CD8-positive, alpha-beta memory T cell (primary cell): ENCODE measurements at regions of chr1 and their contacts with region 1.

Region 1: GRCh38 chr1:89274411-89274857 is 1.8 kb upstream of the GBP5 start:
- DNase-seq: peak in 1 of 5 donors; percentile 41
- H3K4me3 ChIP-seq: peak overlapping the region; percentile 35
- H3K4me3 Mint-ChIP-seq: peak overlapping the region; percentile 83 to 91 (median 89)
- H3K27ac ChIP-seq: peak overlapping the region; percentile 41
- H3K27ac Mint-ChIP-seq: peak overlapping the region; percentile 97 to 99 (median 98)
- H3K4me1 ChIP-seq: peaks cover 50% of the 10 kb centered on the region
- H3K4me1 Mint-ChIP-seq: peaks cover 59 to 84% (median 77%) of the 10 kb centered on the region in 3 donors
- H3K27me3 ChIP-seq: no peaks in the 10 kb centered on the region
- H3K27me3 Mint-ChIP-seq: no peaks in the 10 kb centered on the region

Region 2: DNA sequence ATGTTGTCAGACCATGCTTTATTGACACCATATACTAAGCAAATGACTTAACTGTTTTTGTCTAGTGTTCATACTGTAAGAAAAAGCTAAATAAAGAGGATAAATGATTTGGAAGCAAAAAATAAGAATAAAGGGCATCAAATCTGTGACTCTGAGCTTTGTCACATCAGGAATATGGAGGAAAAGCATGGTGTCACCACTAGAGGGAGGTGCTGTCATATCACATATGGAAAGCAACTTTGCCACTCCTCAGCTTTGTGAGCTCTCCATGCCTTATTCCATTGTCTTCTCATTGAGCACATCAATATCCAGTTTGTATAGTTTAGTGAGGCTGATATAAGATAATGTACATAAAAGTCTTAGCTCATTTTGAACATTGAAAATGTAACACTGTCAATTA is 188.7 kb before region 1 on chr1:
- CTCF ChIA-PET with region 1: interaction called, 13 read pairs
- POLR2A ChIA-PET with region 1: no interaction called
- DNase-seq: peak; percentile 8 to 56 (median 42)
- H3K4me3 ChIP-seq: no peak overlapping the region
- H3K4me3 Mint-ChIP-seq: no peak overlapping the region
- H3K27ac ChIP-seq: no peak overlapping the region
- H3K27ac Mint-ChIP-seq: no peak overlapping the region
- H3K4me1 ChIP-seq: no peaks in the 10 kb centered on the region
- H3K4me1 Mint-ChIP-seq: peaks cover 6 to 8% (median 6%) of the 10 kb centered on the region in 3 donors
- H3K27me3 ChIP-seq: no peaks in the 10 kb centered on the region
- H3K27me3 Mint-ChIP-seq: no peaks in the 10 kb centered on the region

Region 3: DNA sequence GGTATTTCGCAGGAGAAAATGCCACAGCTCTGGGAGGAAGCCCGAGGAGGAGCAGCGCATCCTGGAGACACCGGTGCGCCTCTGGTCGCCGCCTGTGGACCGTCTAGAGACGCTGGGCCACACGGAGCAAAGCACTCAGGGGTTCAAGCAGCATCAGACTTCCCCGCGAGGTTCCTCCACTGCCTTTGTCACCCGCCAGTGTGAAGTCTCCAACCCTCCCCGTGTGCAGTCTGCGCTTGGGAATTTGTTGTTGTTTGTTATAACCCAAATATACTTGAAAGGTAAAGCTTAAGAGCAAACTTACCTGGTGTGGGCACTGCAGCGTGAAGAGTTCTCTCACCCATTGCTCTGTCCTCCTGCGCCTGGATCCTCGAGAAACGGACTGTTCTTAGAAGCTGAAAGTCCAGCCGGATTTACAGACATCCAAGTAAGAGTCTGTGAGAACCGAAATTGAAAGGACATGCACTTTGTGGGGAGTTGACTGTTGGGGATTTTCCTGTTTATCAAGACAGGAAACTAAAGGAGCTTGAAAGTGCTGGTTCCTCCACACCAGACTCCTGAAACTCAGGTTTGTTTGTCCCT is 75.9 kb before region 1 on chr1 and contains the start of gene GBP4:
- CTCF ChIA-PET with region 1: interaction called, 12 read pairs
- POLR2A ChIA-PET with region 1: interaction called, 3 read pairs
- DNase-seq: peak; percentile 28 to 61 (median 47)
- H3K4me3 ChIP-seq: peak within 1 kb of the TSS; percentile 95
- H3K4me3 Mint-ChIP-seq: peak within 1 kb of the TSS; percentile 94 to 99 (median 98)
- H3K27ac ChIP-seq: peak within 1 kb of the TSS; percentile 83
- H3K27ac Mint-ChIP-seq: peak within 1 kb of the TSS; percentile 92 to 98 (median 98)
- H3K4me1 ChIP-seq: peaks cover 59% of the 10 kb centered on the region
- H3K4me1 Mint-ChIP-seq: peaks cover 82 to 86% (median 83%) of the 10 kb centered on the region in 3 donors
- H3K27me3 ChIP-seq: no peaks in the 10 kb centered on the region
- H3K27me3 Mint-ChIP-seq: no peaks in the 10 kb centered on the region
- total RNA-seq, gene GBP4: 24.2 to 26.6 TPM

Region 4: DNA sequence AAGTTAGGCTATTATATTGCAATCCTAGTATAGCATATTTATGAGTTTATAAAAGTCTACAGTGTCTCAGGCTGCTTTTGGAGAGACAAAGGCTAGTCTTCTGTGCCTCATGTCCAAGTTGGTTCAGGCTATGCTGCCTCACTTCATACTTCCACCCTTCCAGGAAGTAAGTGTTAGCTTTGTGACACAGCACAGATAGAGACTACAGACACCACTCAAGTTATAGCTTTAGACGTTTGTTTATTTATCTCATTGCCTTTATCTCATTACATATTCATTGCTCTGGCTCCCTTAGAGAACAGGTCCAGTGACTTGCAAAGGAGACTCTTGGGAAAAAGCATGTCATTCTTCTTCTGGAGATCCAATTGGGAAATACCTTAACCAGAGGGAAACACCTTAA is 53.1 kb before region 1 on chr1:
- CTCF ChIA-PET with region 1: no interaction called
- POLR2A ChIA-PET with region 1: no interaction called
- DNase-seq: no peak
- H3K4me3 ChIP-seq: no peak overlapping the region
- H3K4me3 Mint-ChIP-seq: no peak overlapping the region
- H3K27ac ChIP-seq: no peak overlapping the region
- H3K27ac Mint-ChIP-seq: no peak overlapping the region
- H3K4me1 ChIP-seq: no peaks in the 10 kb centered on the region
- H3K4me1 Mint-ChIP-seq: peaks cover 3 to 19% (median 6%) of the 10 kb centered on the region in 3 donors
- H3K27me3 ChIP-seq: no peaks in the 10 kb centered on the region
- H3K27me3 Mint-ChIP-seq: no peaks in the 10 kb centered on the region

Region 5: DNA sequence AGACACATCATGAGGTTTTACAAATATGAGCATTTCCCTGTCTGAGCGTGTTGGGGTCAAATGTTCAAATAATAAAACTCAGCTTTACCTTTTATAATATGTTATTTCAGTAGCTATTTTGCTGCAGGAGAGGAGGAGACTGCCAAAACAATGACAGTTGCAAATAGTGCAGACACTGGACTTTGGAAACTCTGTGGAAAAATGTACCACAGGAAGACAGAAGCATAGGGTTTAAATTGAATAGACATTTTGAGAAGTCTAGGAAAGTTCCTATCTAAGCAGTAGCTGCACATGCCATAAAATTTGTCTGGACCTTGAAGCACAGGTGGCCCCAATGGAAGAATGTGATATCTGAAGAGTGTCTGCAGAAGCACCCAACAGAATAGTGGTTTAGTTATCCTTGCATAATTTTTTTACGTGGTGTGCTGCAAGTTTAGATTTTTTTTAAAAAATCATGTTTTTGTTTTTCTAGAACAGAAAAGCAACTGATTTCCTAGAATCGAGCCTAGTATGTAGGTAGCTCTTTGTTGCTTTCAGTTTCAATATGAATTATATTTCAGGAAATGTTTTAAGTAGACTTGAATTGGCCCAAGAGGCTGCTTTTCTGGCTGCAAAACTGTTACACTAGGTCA is 12.2 kb after region 1 on chr1:
- CTCF ChIA-PET with region 1: interaction called, 11 read pairs
- POLR2A ChIA-PET with region 1: interaction called, 19 read pairs
- DNase-seq: peak in 2 of 5 donors; percentile 30 to 39
- H3K4me3 ChIP-seq: peak overlapping the region; percentile 45
- H3K4me3 Mint-ChIP-seq: peak overlapping the region; percentile 38 to 83 (median 46)
- H3K27ac ChIP-seq: peak overlapping the region; percentile 49
- H3K27ac Mint-ChIP-seq: peak overlapping the region; percentile 84 to 98 (median 94)
- H3K4me1 ChIP-seq: peaks cover 62% of the 10 kb centered on the region
- H3K4me1 Mint-ChIP-seq: peaks cover 69 to 92% (median 77%) of the 10 kb centered on the region in 3 donors
- H3K27me3 ChIP-seq: no peaks in the 10 kb centered on the region
- H3K27me3 Mint-ChIP-seq: no peaks in the 10 kb centered on the region